ENCODE measurements at regions of chr4 and their contacts with region 1.

Region 1: GRCh38 chr4:37008199-37008598 is 236.3 kb upstream of the NWD2 start:
- DNase-seq: no peak
- ATAC-seq: no peak
- H3K4me3 ChIP-seq: no peak overlapping the region
- H3K27ac ChIP-seq: no peak overlapping the region
- H3K4me1 ChIP-seq: no peaks in the 10 kb centered on the region
- H3K27me3 ChIP-seq: no peaks in the 10 kb centered on the region
- CTCF ChIP-seq: no peak
- POLR2A ChIP-seq: no peak

Region 2: DNA sequence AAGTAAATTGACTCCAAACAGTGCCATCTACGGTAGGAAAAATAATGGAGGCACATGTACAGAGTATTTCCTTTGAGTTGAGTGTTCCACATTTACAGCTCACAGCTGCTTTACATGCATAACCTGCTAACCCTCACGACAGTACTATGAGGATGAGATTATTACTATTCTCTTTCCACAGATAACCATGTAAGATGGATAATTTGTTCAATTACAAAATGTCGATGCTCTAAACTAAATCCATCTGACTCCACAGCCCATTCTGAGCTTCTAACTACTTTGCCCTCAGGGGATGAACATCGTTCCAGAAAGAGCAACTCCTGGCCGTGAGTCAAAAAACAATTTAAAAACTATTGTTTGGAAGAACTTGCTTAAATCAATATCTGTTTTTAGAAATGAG is 94.1 kb before region 1 on chr4:
- in situ Hi-C with region 1: loop called in 1 of 4 experiments (anchors 25 kb)
- intact Hi-C with region 1: no loop called
- DNase-seq: no peak
- ATAC-seq: no peak
- H3K4me3 ChIP-seq: no peak overlapping the region
- H3K27ac ChIP-seq: no peak overlapping the region
- H3K4me1 ChIP-seq: no peaks in the 10 kb centered on the region
- H3K27me3 ChIP-seq: no peaks in the 10 kb centered on the region
- CTCF ChIP-seq: no peak
- POLR2A ChIP-seq: no peak